Right ventricle myocardium inferior (tissue), 1 donor: ENCODE measurements at regions of chr3 and their contacts with region 1.

Region 1: GRCh38 chr3:149536429-149536828 is 61.9 kb downstream of the TM4SF4 start:
- DNase-seq: peak; percentile 82
- ATAC-seq: peak; percentile 82

Region 2: DNA sequence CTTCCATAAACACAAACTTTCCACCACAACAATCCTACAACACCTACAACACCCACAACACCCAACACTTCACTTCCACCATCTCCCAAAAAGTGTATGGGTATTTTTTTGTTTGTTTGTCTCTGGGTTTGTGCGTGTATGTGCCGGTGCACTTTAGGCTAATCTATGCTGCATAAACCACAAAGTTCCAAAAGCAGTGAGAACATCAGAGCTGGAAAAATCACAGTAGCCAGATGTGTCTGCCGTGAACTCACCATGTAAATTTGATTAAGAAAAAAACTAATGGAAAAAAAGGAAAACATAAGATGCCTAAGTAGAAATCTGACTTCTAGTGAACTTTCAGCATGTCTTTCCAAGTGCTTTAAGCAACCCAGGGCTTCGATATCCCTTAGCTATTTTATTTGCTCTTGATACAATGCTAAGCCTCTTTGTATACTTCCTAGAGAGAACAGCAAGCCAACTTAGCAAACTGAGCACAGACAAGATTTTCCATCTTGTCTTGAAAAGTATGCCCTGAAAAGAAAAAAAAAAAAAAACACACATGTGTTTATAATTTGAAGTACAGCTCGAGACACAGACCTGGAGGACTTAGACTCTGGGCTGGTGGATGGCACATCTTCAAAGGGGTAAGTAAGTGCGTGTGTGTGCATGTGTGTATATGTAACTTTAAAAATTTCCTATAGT is 30.0 kb after region 1 on chr3:
- intact Hi-C with region 1: loop called (anchors 5 kb)
- DNase-seq: no peak
- ATAC-seq: no peak